Prostate gland (tissue), 2 donors: ENCODE measurements at regions of chr10 and their contacts with region 1.

Region 1: DNA sequence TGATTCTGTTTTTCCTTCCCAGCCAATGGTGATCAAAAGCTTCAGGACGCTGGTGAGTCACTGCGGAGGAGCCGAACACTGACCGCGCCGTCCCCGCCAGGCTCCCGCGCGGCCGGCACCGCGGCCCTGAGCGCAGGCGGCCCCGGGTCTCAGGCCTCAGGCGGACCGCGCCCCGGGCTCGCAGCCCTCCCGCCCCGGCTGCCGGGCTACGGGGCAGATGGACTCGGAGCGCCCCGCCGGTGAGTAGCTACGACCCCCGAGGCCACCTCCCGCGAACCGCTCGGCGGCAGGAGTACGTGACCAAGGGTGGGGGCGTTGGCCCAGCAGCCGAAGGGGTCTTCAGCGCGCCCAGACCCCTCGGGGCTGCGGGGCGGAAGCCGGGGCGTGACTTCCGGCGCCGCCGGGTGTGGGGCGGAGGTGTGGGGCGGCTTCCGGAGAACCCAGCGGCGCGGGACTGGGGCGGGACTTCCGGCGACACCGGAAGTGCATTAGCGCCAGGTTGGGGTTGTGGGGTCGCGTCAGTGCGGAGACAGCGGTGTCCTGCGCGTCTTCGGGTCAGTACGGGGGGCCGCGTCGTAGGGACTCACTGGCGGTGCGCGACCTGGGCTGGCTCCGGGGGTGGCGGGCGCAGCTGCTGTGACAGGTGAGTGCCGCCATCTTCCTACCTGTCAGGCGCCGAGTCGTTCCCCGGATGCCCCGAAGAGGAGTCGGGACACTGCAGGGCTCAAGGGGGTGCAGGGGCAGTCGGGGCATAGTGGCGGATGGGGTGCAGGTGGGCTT is at the start of gene WDR37:
- DNase-seq: peak; percentile 80
- H3K4me3 ChIP-seq: peak within 1 kb of the TSS; percentile 79 to 91
- H3K27ac ChIP-seq: peak within 1 kb of the TSS; percentile 94 to 98
- H3K4me1 ChIP-seq: peaks cover 13% of the 10 kb centered on the region
- H3K27me3 ChIP-seq: no peaks in the 10 kb centered on the region
- CTCF ChIP-seq: no peak
- POLR2A ChIP-seq: peak; percentile 33
- total RNA-seq, gene WDR37: 11.9 to 22.8 TPM

Region 2: DNA sequence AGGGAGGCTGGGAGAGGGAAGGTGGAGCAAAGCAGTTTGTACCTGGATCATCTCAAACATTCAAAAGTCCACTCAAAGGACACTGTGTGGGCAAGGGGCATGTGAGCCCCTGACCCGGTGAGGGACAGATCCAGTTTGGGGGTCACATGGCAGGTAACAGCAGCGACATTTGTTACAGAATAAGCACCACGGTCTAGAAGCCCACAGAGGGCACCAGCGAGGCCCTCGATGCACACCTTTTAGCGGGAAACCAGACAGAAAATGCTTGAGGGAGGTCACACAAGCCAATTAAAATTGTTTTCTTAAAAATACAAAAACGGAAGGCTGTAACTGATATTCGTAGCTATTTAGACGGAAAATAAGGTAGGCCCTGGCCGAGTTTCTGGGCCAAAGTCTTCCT is 776.9 kb before region 1 on chr10:
- intact Hi-C with region 1: no loop called
- DNase-seq: no peak
- H3K4me3 ChIP-seq: no peak overlapping the region
- H3K27ac ChIP-seq: no peak overlapping the region
- H3K4me1 ChIP-seq: no peaks in the 10 kb centered on the region
- H3K27me3 ChIP-seq: no peaks in the 10 kb centered on the region
- CTCF ChIP-seq: no peak
- POLR2A ChIP-seq: no peak

Region 3: GRCh38 chr10:689433-690371 is 366.8 kb before region 1 on chr10 and contains the start of gene DIP2C:
- intact Hi-C with region 1: loop called (anchors 10 kb)
- DNase-seq: peak; percentile 69
- H3K4me3 ChIP-seq: peak within 1 kb of the TSS; percentile 68 to 79
- H3K27ac ChIP-seq: peak within 1 kb of the TSS; percentile 85 to 88
- H3K4me1 ChIP-seq: no peaks in the 10 kb centered on the region
- H3K27me3 ChIP-seq: no peaks in the 10 kb centered on the region
- CTCF ChIP-seq: no peak
- POLR2A ChIP-seq: no peak
- total RNA-seq, gene DIP2C: 12.3 to 41.8 TPM